Cardiac septum (tissue), 1 donor: ENCODE measurements at regions of chr6 and their contacts with region 1.

Region 1: DNA sequence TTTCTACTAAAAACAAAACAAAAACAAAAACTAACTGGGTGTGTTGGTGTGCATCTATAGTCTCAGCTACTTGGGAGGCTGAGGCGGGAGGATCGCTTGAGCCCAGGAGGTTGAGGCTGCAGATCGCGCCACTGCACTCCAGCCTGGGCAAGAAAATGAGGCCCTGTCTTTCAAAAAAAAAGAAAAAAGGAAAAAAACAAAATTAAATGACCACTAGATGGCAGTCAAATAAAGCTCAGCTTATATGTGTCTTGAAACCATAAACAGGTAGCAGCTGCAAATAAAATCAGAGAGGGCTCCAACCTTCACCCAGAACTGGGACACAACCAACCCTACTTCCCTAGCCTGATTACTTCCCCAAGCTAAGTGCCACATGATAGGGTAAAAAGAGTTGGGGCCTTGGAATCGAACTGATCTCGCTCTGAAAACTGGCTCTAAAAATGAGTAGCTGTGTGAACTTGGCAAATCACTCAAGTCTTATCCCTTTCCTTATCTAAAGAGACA is 67.1 kb upstream of the ADGRF4 start:
- DNase-seq: no peak

Region 2: GRCh38 chr6:47413752-47414422 is 217.4 kb before region 1 on chr6:
- intact Hi-C with region 1: loop called (anchors 10 kb)
- DNase-seq: no peak

Region 3: DNA sequence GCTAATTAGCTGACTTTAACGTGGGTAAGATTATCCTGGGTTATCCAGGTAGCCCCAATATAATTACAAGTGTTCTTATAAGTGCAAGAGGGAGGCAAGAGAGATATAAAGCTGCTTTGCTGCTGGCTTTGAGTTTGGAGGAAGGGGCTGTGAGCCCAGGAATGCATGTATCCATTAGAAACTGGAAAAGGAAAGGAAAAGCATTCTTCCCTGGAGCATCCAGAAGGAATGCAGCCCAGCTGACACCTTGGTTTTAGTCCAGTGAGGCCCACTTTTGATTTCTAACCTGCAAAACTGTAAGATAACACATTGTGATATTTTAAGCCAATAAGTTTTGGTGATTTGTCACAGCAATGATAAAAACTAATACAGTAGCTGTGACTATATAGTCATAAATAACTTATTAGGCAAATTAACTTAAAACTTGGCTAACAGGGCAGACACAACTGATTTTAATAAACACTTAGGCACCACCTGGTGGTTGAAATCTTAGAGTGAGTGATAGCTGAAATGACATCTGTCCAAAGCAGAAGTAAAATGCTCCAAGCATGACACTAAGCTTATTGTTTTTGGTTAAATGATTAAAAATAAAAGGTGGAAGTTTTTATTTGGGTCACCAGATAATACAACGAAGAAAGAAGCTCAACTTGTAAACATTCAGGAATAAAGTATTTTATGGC is 102.7 kb after region 1 on chr6:
- intact Hi-C with region 1: loop called (anchors 2 kb)
- DNase-seq: no peak

Region 4: DNA sequence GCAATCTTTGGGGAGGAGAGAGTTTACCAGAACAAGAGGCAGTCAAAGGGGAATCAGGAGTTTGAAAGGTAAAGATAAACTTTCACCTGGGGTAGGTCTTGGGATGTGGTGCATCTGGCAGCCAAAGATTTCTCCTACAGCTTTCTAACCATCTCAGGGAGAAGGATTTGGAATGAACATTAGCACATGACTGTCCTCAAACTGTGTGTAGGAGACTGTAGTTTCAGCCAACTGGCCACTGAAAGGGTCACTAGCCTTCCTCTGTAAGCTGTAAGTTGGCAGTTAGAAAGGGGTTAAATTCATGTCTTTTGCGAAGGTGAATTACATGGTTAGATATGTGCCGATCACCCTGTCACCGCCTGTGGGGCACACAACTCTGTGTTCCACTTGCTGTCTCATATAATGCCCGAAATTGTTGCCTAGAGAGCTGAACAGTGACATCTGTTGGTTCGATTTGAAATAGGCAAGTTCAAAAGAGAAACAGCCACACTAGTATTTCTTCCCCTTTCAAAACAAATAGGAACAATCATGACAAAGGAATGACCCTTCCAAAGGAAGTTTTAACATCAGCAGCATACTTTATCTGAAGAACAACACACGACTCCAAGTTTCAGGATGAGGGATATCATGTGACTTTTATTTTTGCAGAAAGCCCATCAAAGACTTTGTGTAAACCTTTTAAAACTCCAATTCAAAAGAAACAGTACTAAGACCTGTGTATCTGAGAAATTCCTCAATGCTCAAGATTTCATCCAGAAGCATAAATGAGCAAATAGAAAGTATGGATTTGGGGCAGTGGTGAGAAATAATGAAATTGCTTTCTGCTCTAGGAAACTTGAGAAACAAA is 149.4 kb after region 1 on chr6:
- intact Hi-C with region 1: loop called (anchors 1 kb)
- DNase-seq: no peak